ENCODE measurements at regions of chr1 and their contacts with region 1.

Region 1: DNA sequence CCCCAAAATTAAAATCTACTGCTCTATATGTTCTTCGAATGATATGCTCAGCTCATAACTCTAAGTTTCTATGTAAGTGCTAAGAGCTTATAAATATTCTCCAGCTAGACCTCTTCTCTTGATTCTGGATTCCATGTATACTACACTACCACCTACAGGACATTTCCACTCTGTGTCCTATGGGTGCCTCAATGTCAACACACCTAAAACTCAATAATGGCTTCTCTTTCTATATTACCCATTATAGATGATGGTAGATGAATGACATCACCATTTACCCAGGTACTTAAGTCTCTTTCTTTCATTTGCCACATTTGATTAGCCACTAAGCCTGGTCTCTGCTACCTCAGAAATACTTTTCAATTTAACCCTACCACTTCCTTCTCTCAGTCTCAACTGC is 41.3 kb downstream of the TBX19 start:
- DNase-seq: no peak
- ATAC-seq: peak; percentile 78
- H3K4me3 Mint-ChIP-seq: no peak overlapping the region
- H3K27ac Mint-ChIP-seq: no peak overlapping the region
- H3K4me1 Mint-ChIP-seq: peaks cover 13% of the 10 kb centered on the region
- H3K27me3 Mint-ChIP-seq: no peaks in the 10 kb centered on the region

Region 2: GRCh38 chr1:167499664-167500101 is 822.3 kb before region 1 on chr1:
- CTCF ChIA-PET with region 1: no interaction called
- POLR2A ChIA-PET with region 1: no interaction called
- intact Hi-C with region 1: no loop called
- DNase-seq: peak; percentile 56
- ATAC-seq: peak; percentile 57
- H3K4me3 Mint-ChIP-seq: peak overlapping the region; percentile 42
- H3K27ac Mint-ChIP-seq: peak overlapping the region; percentile 95
- H3K4me1 Mint-ChIP-seq: peaks cover 99% of the 10 kb centered on the region
- H3K27me3 Mint-ChIP-seq: no peaks in the 10 kb centered on the region

Region 3: DNA sequence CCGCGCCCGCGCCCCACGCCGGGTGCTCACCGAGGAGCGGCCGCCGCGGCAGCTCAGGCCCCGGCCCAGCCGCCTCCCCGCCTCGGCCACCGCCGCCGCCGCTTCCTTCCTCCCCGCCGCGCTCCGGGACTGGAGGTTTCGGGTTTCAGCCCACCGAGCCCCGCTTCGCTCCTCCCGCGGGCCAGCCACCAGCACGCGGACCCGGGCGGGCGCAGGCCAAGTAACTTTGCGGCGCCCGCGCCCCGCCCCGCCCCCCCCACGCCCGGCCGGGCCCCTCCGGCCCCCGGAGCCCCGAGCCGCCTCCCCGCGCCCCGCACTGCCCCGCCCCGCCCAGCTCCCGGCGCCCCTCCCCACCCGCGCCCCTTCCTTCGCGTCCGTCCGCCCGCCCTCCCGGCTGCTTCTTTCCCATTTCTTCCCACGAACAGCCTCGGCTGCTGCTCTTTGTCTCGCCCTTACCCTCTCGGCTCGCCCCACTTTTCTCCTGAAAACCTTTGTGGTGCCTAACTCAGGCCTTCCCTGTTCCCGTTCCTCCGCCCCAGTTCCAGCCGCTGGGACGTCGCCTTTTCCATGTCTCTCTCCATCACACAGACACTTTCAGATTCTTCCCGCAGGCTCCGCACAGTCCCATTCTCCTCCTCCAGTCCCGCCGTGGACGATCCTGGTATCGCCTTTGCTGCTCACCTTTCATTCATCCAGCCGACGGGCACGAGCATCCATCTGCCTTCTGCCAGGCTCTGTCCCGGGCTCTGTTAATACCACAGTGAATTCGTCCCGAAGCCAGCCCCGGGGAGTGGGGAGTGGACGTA is 185.0 kb before region 1 on chr1 and contains the start of gene GPR161:
- CTCF ChIA-PET with region 1: no interaction called
- POLR2A ChIA-PET with region 1: no interaction called
- intact Hi-C with region 1: loop called in 1 of 2 experiments (anchors 5 kb)
- DNase-seq: peak; percentile 40
- ATAC-seq: no peak
- H3K4me3 Mint-ChIP-seq: peak within 1 kb of the TSS; percentile 73
- H3K27ac Mint-ChIP-seq: peak within 1 kb of the TSS; percentile 61
- H3K4me1 Mint-ChIP-seq: peaks cover 40% of the 10 kb centered on the region
- H3K27me3 Mint-ChIP-seq: peaks cover 37% of the 10 kb centered on the region
- total RNA-seq, gene GPR161: 0.42 to 0.59 TPM